HAP-1 (cell line): ENCODE measurements at regions of chr18 and their contacts with region 1.

Region 1: GRCh38 chr18:9055185-9055584 is 47.3 kb upstream of the NDUFV2 start:
- DNase-seq: peak in 1 of 2 experiments; percentile 32
- H3K4me3 ChIP-seq: no peak overlapping the region
- H3K4me1 ChIP-seq: no peaks in the 10 kb centered on the region
- H3K27me3 ChIP-seq: no peaks in the 10 kb centered on the region

Region 2: DNA sequence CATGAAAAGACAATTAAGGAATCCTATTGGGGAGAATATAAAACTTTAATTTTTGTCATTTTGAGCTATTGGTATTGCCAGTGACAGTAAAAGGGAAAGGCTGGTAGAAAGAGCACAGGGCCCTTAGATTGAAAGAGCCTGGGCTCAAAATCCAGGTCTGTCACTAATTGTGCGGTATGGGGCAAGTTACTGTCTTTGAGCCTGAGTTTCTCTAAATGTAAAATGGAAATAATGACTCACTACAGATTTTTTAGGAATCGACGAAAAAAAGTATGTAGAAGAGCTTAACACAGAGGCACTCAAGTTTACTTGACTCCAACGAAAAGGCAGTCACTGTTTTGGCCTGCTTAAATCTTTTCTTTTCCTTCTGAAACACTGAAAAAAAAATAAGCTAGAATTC is 54.3 kb after region 1 on chr18:
- in situ Hi-C with region 1: no loop called
- DNase-seq: peak in 1 of 2 experiments; percentile 11
- H3K4me3 ChIP-seq: no peak overlapping the region
- H3K4me1 ChIP-seq: peaks cover 57% of the 10 kb centered on the region
- H3K27me3 ChIP-seq: no peaks in the 10 kb centered on the region

Region 3: DNA sequence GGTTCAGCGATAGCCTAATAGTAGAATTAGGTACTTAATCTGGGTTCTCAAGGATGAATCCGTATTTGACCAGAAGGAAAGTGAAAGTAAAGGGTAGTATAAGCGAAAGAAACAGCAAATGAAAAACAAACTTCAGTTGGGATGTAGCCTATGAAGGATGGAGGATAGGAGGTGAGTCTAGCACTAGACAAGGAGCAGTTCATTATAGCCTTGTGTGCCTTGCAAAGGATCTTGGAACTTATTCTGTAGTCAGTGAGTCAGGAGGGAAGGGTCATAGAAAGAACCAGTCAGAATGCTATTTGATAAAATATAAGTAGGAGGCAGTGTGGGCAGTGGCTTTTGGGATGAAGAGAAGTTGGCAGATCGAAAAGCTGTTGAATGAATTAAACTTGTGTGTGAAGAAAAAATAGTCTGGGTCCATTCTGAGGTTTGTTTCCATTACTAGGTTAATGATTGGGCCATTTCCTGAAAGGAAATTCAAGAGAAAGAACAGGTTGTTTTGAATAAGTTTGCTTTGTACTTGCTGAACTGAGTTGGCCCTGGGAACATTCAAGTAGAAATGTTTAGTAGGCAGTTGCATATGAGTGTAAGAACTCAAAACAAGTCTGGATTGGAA is 129.9 kb after region 1 on chr18:
- in situ Hi-C with region 1: no loop called
- DNase-seq: no peak
- H3K4me3 ChIP-seq: no peak overlapping the region
- H3K4me1 ChIP-seq: 0 out of 2 replicates have a peak, but pooled peaks cover 3% of the 10 kb centered on the region
- H3K27me3 ChIP-seq: no peaks in the 10 kb centered on the region

Region 4: GRCh38 chr18:9516437-9517064 is 461.4 kb after region 1 on chr18:
- in situ Hi-C with region 1: loop called (anchors 25 kb)
- DNase-seq: peak in 1 of 2 experiments; percentile 67
- H3K4me3 ChIP-seq: no peak overlapping the region
- H3K4me1 ChIP-seq: no peaks in the 10 kb centered on the region
- H3K27me3 ChIP-seq: no peaks in the 10 kb centered on the region

Region 5: DNA sequence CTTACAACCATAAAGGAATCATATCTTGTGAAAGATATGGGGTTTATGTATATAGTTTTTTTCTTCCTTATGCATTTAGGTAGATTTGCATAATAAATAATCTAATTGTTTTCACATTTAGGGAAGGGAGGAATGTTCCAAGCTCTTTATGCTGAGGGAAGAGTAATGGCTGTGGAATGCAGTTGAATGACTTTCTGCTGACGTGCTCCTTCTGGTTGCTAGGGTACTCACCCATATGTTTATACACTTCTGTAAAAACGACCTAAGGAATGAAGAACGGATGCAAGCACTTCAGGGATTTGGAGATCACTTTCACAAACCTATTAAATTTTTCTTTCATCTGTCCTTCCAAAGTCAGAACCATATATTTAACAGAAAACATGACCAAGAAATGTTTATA is 588.4 kb after region 1 on chr18:
- in situ Hi-C with region 1: no loop called
- DNase-seq: peak; percentile 61 to 96
- H3K4me3 ChIP-seq: no peak overlapping the region
- H3K4me1 ChIP-seq: peaks cover 21% of the 10 kb centered on the region
- H3K27me3 ChIP-seq: no peaks in the 10 kb centered on the region